ENCODE measurements at regions of chrX and their contacts with region 1.

Region 1: GRCh38 chrX:139559383-139560042 is 29.0 kb downstream of the F9 start:
- DNase-seq: peak in 1 of 3 donors; percentile 66
- ATAC-seq: peak; percentile 55
- H3K4me3 ChIP-seq: no peak overlapping the region
- H3K4me1 ChIP-seq: no peaks in the 10 kb centered on the region
- CTCF ChIP-seq: no peak

Region 2: GRCh38 chrX:139126493-139126892 is 433.0 kb before region 1 on chrX:
- intact Hi-C with region 1: loop called in 1 of 2 experiments (anchors 5 kb)
- DNase-seq: peak in 2 of 3 donors; percentile 21 to 60
- ATAC-seq: peak; percentile 68
- H3K4me3 ChIP-seq: no peak overlapping the region
- H3K4me1 ChIP-seq: no peaks in the 10 kb centered on the region
- CTCF ChIP-seq: no peak